ENCODE measurements at regions of chr4 and their contacts with region 1.

Region 1: GRCh38 chr4:2862528-2862927 is 18.9 kb downstream of the ADD1 start:
- DNase-seq: no peak
- ATAC-seq: peak; percentile 61
- H3K4me3 ChIP-seq: no peak overlapping the region
- H3K4me1 ChIP-seq: peaks cover 82% of the 10 kb centered on the region
- CTCF ChIP-seq: no peak

Region 2: DNA sequence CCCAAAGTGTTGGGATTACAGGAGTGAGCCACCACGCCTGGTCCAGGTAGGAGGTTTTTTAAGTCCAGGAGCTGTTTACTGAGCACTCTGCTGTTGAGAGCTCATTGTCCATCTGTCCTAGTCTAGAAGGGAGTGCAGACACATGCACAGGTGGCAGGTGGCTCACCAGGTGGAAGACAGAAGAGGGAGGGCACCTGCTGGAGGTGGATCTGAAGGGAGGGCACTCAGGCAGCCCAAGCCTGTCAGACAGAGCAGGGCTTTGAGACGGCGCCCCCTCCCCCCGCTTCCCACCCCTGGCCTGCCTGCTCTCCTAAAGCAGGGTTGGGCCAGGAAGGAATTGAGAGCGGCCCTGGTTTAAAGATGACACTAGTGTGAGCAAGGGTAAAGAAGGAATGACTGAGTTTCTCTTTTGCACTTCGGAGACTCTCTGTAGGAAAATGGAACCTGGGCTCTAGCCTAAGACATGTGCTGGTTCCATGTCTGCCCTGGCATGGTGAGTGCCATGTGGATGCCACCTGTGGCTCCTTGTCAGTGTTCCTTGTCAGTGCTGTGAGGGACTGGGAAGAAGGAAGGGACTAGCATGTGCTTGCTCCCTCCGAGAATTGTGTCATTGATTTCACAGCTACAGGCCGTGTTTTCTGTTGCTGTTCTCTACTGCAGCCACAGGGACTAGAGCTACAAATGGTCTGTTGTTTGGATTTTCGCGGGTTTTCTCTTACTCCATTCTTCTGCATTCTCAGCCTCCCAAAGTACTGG is 214.9 kb before region 1 on chr4:
- intact Hi-C with region 1: no loop called
- DNase-seq: peak in 2 of 3 donors; percentile 37 to 38
- ATAC-seq: peak; percentile 67
- H3K4me3 ChIP-seq: no peak overlapping the region
- H3K4me1 ChIP-seq: no peaks in the 10 kb centered on the region
- CTCF ChIP-seq: no peak

Region 3: GRCh38 chr4:2787230-2788088 is 75.1 kb before region 1 on chr4:
- intact Hi-C with region 1: loop called in 1 of 2 experiments (anchors 10 kb)
- DNase-seq: peak in 2 of 3 donors; percentile 47 to 76
- ATAC-seq: peak; percentile 55
- H3K4me3 ChIP-seq: no peak overlapping the region
- H3K4me1 ChIP-seq: peaks cover 18% of the 10 kb centered on the region
- CTCF ChIP-seq: no peak

Region 4: GRCh38 chr4:3122081-3122563 is 259.6 kb after region 1 on chr4:
- intact Hi-C with region 1: no loop called
- DNase-seq: no peak
- ATAC-seq: peak; percentile 22
- H3K4me3 ChIP-seq: no peak overlapping the region
- H3K4me1 ChIP-seq: peaks cover 3% of the 10 kb centered on the region
- CTCF ChIP-seq: no peak

Region 5: GRCh38 chr4:3248811-3249661 is 386.5 kb after region 1 on chr4 and contains the start of gene MSANTD1:
- intact Hi-C with region 1: no loop called
- DNase-seq: peak in 1 of 3 donors; percentile 44
- ATAC-seq: no peak
- H3K4me3 ChIP-seq: no peak within 1 kb of the TSS
- H3K4me1 ChIP-seq: no peaks in the 10 kb centered on the region
- CTCF ChIP-seq: no peak
- total RNA-seq, gene MSANTD1: 0.58 to 1.3 (median 0.69) TPM

Measured in mucosa of descending colon (tissue), 3 donors.